ENCODE measurements at regions of chr4 and their contacts with region 1.

Region 1: GRCh38 chr4:83484500-83485461 is at the start of gene ABRAXAS1:
- DNase-seq: peak; percentile 91 to 97 (median 96)
- ATAC-seq: peak; percentile 98
- H3K4me3 ChIP-seq: peak within 1 kb of the TSS; percentile 93
- H3K4me3 Mint-ChIP-seq: peak within 1 kb of the TSS; percentile 92 to 99 (median 98)
- H3K27ac ChIP-seq: peak within 1 kb of the TSS; percentile 86
- H3K27ac Mint-ChIP-seq: peak within 1 kb of the TSS; percentile 93 to 99 (median 98)
- H3K4me1 ChIP-seq: peaks cover 4 to 11% of the 10 kb centered on the region in 2 donors
- H3K4me1 Mint-ChIP-seq: peaks cover 15 to 49% (median 36%) of the 10 kb centered on the region in 7 donors
- H3K27me3 ChIP-seq: no peaks in the 10 kb centered on the region
- H3K27me3 Mint-ChIP-seq: peaks cover 0 to under 1% (median 0%) of the 10 kb centered on the region in 5 donors
- total RNA-seq, gene ABRAXAS1: 13.9 to 47.6 (median 24.9) TPM

Region 2: GRCh38 chr4:82890901-82891706 is 593.7 kb before region 1 on chr4 and contains the start of gene SEC31A:
- CTCF ChIA-PET with region 1: no interaction called
- POLR2A ChIA-PET with region 1: no interaction called
- intact Hi-C with region 1: loop called in 1 of 2 experiments (anchors 5 kb)
- DNase-seq: peak; percentile 89 to 98 (median 95)
- ATAC-seq: peak; percentile 97
- H3K4me3 ChIP-seq: peak within 1 kb of the TSS; percentile 96
- H3K4me3 Mint-ChIP-seq: peak within 1 kb of the TSS; percentile 86 to 96 (median 93)
- H3K27ac ChIP-seq: peak within 1 kb of the TSS; percentile 99
- H3K27ac Mint-ChIP-seq: peak within 1 kb of the TSS; percentile 92 to 99 (median 97)
- H3K4me1 ChIP-seq: peaks cover 11 to 12% of the 10 kb centered on the region in 2 donors
- H3K4me1 Mint-ChIP-seq: peaks cover 18 to 51% (median 41%) of the 10 kb centered on the region in 7 donors
- H3K27me3 ChIP-seq: no peaks in the 10 kb centered on the region
- H3K27me3 Mint-ChIP-seq: no peaks in the 10 kb centered on the region
- total RNA-seq, gene SEC31A: 137 to 168 (median 149) TPM

Region 3: GRCh38 chr4:83034630-83035494 is 449.9 kb before region 1 on chr4 and contains the start of gene COPS4:
- CTCF ChIA-PET with region 1: interaction called, 3 read pairs
- POLR2A ChIA-PET with region 1: interaction called, 5 read pairs
- intact Hi-C with region 1: loop called in 1 of 2 experiments (anchors 1 kb)
- DNase-seq: peak; percentile 77 to 98 (median 97)
- ATAC-seq: peak; percentile 99
- H3K4me3 ChIP-seq: peak within 1 kb of the TSS; percentile 98
- H3K4me3 Mint-ChIP-seq: peak within 1 kb of the TSS; percentile 92 to 100 (median 98)
- H3K27ac ChIP-seq: peak within 1 kb of the TSS; percentile 94
- H3K27ac Mint-ChIP-seq: peak within 1 kb of the TSS; percentile 94 to 100 (median 97)
- H3K4me1 ChIP-seq: peaks cover 4 to 19% of the 10 kb centered on the region in 2 donors
- H3K4me1 Mint-ChIP-seq: peaks cover 19 to 44% (median 35%) of the 10 kb centered on the region in 7 donors
- H3K27me3 ChIP-seq: no peaks in the 10 kb centered on the region
- H3K27me3 Mint-ChIP-seq: no peaks in the 10 kb centered on the region
- total RNA-seq, gene COPS4: 23.5 to 32.8 (median 24.7) TPM

Region 4: DNA sequence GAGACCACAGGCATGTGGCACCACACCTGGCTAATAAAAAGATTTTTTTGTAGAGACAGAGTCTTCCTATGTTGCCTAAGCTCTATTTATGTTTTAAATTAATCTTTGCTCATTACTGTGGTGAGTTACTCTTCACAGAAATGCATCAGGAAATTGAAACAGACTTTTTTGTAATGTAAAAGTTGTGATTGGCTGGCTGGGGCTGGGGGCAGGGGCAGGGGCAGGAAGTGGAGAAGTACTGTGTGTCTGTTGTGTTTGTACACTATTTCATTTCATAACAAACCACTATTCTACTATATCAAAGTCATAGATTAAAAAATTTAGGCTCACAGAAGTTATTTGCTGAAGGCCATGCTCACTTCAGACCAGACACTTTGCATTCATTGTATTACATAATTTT is 19.2 kb after region 1 on chr4:
- CTCF ChIA-PET with region 1: interaction called, 4 read pairs
- POLR2A ChIA-PET with region 1: interaction called, 21 read pairs
- intact Hi-C with region 1: loop called in 1 of 2 experiments (anchors 1 kb)
- DNase-seq: peak in 6 of 9 donors; percentile 15 to 62 (median 47)
- ATAC-seq: peak; percentile 62
- H3K4me3 ChIP-seq: peak overlapping the region; percentile 1
- H3K4me3 Mint-ChIP-seq: peak overlapping the region; percentile 4 to 70 (median 51)
- H3K27ac ChIP-seq: peak overlapping the region; percentile 51
- H3K27ac Mint-ChIP-seq: peak overlapping the region in 8 of 9 donors; percentile 26 to 94 (median 89)
- H3K4me1 ChIP-seq: peaks cover 3 to 17% of the 10 kb centered on the region in 2 donors
- H3K4me1 Mint-ChIP-seq: peaks cover 10 to 24% (median 18%) of the 10 kb centered on the region in 7 donors
- H3K27me3 ChIP-seq: no peaks in the 10 kb centered on the region
- H3K27me3 Mint-ChIP-seq: no peaks in the 10 kb centered on the region

Region 5: GRCh38 chr4:83582289-83582769 is 97.5 kb after region 1 on chr4:
- CTCF ChIA-PET with region 1: no interaction called
- POLR2A ChIA-PET with region 1: no interaction called
- intact Hi-C with region 1: loop called in 1 of 2 experiments (anchors 5 kb)
- DNase-seq: peak in 1 of 9 donors; percentile 1
- ATAC-seq: peak; percentile 34
- H3K4me3 ChIP-seq: no peak overlapping the region
- H3K4me3 Mint-ChIP-seq: no peak overlapping the region
- H3K27ac ChIP-seq: no peak overlapping the region
- H3K27ac Mint-ChIP-seq: no peak overlapping the region
- H3K4me1 ChIP-seq: no peaks in the 10 kb centered on the region
- H3K4me1 Mint-ChIP-seq: no peaks in the 10 kb centered on the region
- H3K27me3 ChIP-seq: no peaks in the 10 kb centered on the region
- H3K27me3 Mint-ChIP-seq: peaks cover 0 to 6% (median 3%) of the 10 kb centered on the region in 5 donors